Activated B cell treated with CpG ODN at 0.5 μM for 24 hours (primary cell): ENCODE measurements at regions of chr17 and their contacts with region 1.

Region 1: GRCh38 chr17:37761059-37761458 is 16.2 kb upstream of the HNF1B start:
- DNase-seq: no peak
- ATAC-seq: peak; percentile 68
- H3K4me3 Mint-ChIP-seq: peak overlapping the region; percentile 50
- H3K27ac Mint-ChIP-seq: no peak overlapping the region
- H3K4me1 Mint-ChIP-seq: peaks cover 21% of the 10 kb centered on the region
- H3K27me3 Mint-ChIP-seq: peaks cover 26% of the 10 kb centered on the region
- CTCF ChIP-seq: no peak

Region 2: DNA sequence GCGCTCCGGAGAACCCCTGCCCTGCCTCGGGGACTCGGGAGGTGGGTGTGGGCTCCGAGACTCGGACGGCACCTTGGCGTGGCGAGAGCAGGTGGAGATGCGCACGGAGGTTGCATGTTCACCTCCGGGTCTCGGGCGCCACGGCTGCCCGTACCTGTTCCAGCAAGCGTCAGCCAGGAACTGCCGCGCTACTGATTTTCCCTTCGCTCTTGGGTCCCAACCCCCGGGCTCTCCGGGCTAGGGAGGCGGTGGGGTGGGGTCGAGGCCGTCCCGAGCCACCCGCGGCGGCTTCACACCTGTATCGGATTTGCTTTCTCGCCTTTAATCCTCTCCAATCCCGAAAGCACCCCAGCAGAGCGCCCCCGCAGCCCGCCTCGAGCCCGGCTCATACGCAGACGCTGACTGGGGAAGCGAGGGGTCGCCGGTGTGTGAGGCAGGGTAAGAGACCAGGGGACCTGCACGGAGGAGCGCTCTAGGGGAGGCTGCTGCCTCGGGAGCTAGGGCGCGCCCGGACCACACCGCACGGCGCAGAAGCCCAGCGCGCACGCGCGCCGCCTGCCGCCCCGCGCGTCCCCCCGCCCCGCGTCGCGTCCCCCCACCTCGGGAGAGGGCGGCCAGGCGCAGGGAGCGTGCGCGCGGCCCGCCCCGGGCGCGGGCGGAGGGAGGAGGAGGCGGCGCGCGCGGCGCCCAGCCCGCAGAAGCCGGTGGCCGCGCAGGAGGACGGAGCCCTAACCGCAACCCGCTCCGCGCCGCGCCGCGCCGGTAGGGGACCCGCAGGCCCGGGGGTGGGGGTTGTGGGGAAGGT is 271.7 kb before region 1 on chr17 and contains the start of gene DUSP14:
- CTCF ChIA-PET with region 1: no interaction called
- POLR2A ChIA-PET with region 1: interaction called, 11 read pairs
- intact Hi-C with region 1: no loop called
- DNase-seq: peak; percentile 79
- ATAC-seq: peak; percentile 82
- H3K4me3 Mint-ChIP-seq: peak within 1 kb of the TSS; percentile 95
- H3K27ac Mint-ChIP-seq: peak within 1 kb of the TSS; percentile 82
- H3K4me1 Mint-ChIP-seq: peaks cover 26% of the 10 kb centered on the region
- H3K27me3 Mint-ChIP-seq: no peaks in the 10 kb centered on the region
- CTCF ChIP-seq: no peak
- total RNA-seq, gene DUSP14: 4.3 TPM in 2 replicates